RWPE1 (cell line): ENCODE measurements at regions of chr9 and their contacts with region 1.

Region 1: GRCh38 chr9:114291064-114291474 is 31.8 kb upstream of the ORM1 start:
- DNase-seq: peak; percentile 81
- H3K27ac ChIP-seq: no peak overlapping the region
- CTCF ChIP-seq: peak; percentile 98

Region 2: DNA sequence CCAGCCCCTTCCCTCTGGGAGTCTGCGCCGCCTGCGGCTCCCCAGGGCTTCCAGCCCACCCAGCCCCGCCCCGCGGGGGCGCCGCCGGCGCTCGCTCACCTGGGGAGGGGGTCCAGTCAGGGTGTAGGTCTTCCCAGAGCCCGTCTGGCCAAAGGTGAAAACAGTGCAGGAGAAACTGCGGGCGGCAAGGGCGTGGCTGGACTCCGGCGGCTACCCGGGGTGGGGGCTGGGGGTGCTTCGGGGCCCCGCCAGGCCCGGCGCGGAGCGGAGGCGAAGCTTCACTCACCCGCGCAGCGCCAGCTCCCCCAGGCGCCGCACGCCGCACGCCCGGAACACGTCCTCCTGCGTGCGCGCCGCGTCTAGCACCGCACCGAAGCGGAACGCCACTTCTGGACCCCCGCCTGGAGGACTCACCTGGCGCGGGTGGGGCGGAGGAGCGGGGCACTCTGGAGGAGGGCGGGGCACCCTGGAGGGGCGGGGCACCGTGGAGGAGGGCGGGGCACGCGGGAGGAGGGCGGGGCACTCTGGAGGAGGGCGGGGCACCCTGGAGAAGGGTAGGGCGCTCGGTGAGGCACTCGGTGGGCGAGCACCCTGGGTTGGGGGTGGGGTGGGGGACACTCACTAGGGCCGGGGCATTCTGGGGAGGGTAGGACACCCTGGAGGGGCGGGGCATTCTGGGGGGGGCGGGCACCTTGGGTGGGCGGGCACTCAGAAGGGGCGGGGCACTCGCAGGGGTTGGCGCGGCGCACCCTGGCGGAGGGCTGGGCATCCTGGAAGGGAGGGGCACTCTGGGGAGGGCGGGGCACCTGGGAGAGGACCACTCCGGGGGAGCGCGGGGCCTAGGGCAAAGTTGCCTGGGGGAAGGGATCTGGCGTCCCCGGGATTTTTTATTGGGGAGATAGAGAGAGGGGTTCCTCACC is 192.8 kb before region 1 on chr9:
- CTCF ChIA-PET with region 1: interaction called, 11 read pairs
- POLR2A ChIA-PET with region 1: no interaction called
- DNase-seq: peak; percentile 79
- H3K27ac ChIP-seq: no peak overlapping the region
- CTCF ChIP-seq: no peak

Region 3: DNA sequence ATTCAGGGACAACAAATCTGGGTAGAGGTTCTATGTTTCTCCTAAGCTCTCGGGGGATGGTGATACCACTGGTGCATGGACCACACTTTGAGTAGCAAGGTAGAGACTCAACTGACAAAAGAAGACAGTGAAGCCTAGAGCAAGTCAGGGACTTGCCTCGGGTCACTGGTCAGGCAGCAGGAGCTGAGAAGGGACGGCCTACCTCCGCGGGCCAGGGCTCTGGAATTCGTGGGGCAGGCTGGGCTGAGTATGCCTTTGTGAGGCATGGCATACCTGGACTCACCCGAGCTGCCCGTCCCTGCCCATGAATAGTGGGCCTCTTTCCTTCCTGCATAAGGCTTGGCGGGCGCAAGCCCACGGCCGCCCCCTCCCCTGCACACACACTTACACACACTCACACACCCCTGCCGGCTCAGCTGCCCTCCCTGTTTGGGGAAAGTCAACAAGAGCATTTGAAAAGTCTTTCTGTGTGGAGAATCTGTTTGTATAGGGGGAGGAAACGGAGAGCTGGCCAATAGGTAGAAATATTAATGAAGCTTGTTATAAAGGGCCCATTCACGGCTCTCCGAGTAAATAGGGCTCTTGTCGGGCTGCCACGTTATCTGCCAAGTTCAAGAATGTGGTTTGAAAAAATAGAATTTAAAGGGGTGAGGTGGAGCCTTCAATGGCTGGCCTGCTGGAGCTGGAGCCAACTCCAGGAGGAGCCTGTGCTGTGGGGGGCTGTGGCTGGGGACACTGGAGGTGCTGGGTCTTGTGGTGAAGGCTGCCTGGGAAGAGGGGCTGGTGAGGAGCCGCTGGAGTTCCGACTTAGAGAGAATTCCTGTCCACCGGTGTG is 172.9 kb before region 1 on chr9:
- CTCF ChIA-PET with region 1: interaction called, 25 read pairs
- POLR2A ChIA-PET with region 1: no interaction called
- DNase-seq: no peak
- H3K27ac ChIP-seq: no peak overlapping the region
- CTCF ChIP-seq: no peak

Region 4: GRCh38 chr9:114141553-114142402 is 149.3 kb before region 1 on chr9:
- CTCF ChIA-PET with region 1: interaction called, 11 read pairs
- POLR2A ChIA-PET with region 1: no interaction called
- DNase-seq: no peak
- H3K27ac ChIP-seq: no peak overlapping the region
- CTCF ChIP-seq: no peak

Region 5: DNA sequence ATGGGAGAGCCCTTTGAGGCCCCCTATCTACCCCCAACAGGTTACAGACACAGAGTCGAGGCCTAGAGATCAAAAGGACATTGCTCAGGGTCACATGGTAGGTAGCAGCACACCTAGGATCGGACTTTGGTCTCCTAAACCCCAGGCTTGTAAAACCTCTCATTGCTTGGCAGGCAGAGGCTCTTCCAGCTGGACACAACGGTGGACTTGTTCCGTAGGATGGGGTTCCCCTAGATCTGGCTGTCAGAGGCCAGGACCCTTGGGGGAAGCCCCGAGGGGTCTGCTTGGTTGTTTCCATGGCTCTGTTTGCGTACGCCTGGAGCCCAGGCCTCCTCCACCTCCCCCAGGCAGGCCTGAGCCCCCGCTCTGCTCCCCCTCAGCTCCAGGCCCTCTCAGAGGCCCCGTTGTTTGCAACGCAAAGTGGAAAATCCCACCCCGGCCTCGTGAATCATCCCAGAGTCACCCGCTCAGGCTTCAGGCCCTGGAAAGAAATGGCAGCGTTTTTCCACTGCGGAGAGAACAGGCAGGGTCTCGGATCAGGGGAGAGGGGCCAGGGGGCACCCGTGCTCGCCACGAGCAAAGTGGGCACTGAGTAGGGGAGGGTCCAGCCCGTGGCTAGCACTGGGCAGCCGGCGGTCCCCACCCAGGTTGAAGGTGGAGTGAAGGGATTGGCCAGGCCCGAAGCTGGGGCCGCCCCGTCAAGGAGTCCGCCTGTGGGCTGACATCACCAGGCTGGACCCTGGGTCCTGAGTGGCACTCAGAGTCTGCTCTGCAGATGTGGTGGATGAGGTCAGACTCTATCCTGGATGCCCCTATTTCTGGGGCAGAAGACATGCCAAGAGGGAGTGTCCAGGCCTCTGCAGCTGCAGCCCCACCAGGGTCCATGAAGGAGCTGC is 115.9 kb before region 1 on chr9:
- CTCF ChIA-PET with region 1: interaction called, 11 read pairs
- POLR2A ChIA-PET with region 1: no interaction called
- DNase-seq: no peak
- H3K27ac ChIP-seq: peak overlapping the region; percentile 87
- CTCF ChIP-seq: no peak

Region 6: DNA sequence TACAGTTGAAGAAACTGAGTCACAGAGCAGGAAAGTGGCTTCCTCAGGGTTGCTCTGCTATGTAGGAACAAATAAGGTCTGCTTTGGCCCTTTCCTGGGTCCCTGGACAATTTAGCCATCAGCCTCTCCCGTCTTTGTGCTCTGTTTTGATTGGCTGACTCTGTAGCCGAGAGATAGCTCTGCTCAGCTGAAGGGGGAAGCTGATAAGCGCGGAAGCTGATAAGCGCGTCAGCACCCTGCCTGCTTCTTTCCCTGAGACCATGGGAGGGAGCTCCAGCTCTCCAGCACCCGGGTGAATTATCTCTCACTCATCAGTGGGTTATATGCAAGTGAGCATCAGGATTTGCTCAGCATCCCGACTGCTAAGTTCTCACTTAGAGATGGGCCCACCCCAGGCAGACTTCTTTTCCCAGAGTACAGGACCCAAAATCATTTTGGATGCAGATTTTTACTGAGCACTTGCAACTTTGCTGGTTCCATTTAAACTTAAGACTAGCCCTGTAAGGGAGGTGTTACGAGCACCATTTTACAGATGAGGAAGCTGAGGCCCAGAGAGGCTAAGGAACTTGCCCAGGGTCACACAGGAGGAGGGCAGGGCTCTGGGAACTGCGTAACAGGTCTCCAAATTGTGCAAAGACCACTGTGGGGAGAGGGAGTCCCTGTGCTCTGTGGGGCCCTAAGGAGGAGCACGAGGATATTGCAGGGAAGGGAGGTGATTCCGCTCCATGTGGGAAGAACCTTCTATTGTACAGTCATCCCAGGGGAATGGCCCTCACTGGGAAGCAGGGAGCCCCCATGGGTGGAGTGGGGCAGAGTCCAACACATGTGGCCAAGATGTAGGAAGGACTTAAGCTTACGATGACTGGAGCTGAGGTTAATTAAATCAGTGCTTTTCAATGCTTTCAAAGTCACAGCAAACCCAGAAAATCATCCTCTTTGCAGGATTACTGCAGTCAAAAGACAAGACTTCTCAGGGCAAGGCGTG is 51.9 kb before region 1 on chr9:
- CTCF ChIA-PET with region 1: interaction called, 18 read pairs
- POLR2A ChIA-PET with region 1: no interaction called
- DNase-seq: peak; percentile 58
- H3K27ac ChIP-seq: no peak overlapping the region
- CTCF ChIP-seq: no peak

Region 7: DNA sequence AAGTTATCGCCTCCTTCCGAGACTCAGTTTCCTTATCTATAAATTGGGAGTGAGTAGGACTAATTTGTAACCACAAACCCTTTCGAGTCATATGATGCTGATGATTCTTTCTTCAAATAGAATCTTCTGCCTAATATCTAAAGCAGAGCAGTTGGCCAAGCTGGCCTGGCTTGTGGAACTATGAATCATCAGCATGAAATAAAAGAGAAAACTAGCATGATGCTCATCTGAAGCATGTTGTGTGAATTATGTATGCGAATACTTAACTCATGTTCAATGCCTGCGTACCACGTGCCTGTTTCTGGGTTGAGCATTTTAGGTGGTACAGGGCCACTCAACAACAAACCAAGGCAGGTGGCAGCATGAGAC is 16.8 kb after region 1 on chr9:
- CTCF ChIA-PET with region 1: no interaction called
- POLR2A ChIA-PET with region 1: no interaction called
- DNase-seq: no peak
- H3K27ac ChIP-seq: no peak overlapping the region
- CTCF ChIP-seq: no peak